Breast epithelium (tissue), 4 donors: ENCODE measurements at regions of chr10 and their contacts with region 1.

Region 1: DNA sequence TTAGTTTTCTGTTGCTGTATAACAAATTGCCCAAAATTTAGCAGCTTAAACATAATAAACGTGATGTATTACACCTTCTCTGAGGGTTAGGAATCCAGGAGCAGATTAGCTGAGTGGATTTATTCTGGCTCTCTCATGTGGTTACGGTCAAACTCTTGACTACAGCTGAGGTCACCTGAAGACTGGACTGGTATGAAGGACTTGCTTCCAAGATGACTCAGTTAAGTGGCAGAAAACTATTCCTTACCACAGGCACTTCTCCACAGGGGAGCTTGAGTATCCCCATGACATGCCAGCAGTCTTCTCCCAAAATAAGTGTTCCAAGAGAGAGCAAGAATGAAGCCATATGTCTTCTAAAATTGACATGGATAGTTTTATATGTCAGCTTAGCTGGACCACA is 957.2 kb upstream of the GHITM start:
- DNase-seq: no peak
- H3K4me3 ChIP-seq: no peak overlapping the region
- H3K27ac ChIP-seq: no peak overlapping the region
- H3K4me1 ChIP-seq: no peaks in the 10 kb centered on the region
- H3K27me3 ChIP-seq: no peaks in the 10 kb centered on the region
- CTCF ChIP-seq: no peak
- POLR2A ChIP-seq: no peak

Region 2: DNA sequence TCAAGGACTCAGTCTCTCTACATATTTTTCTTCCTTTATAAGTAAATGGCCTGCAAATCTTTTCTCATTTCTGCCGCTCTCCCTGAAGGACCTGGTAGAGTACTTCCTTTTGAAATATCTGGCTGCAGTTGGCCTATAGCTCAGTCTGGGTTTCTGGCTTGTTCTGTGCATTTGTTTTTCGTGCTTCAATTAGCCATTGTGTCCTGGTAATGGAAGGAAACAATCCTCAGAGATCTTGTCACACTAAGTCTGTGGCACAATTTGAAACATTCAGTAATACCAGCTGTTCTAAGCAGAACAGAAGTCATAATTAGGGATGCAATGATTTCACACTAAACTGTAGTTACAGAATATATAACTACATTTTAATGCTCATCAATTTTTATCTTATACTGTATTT is 762.1 kb before region 1 on chr10:
- intact Hi-C with region 1: no loop called
- DNase-seq: no peak
- H3K4me3 ChIP-seq: no peak overlapping the region
- H3K27ac ChIP-seq: no peak overlapping the region
- H3K4me1 ChIP-seq: no peaks in the 10 kb centered on the region
- H3K27me3 ChIP-seq: no peaks in the 10 kb centered on the region
- CTCF ChIP-seq: no peak
- POLR2A ChIP-seq: no peak

Region 3: DNA sequence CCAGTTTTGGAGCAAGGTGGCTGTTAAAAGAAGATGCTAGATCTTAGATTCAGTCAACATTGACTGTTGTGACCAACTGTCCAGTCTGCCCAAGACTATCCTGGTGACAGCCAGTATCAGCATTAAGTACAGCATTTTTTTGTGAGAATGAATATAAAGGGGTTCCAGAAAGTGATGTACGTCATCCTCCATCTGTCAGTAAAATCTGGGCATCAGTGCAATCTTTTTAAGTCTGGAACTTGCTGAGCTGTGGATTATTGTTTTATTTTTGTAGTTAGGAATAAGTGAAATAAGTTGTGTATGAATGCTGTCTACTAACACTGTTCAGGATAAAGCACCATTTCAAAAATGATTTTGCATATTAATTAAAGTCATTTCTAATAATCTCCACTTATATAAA is 62.7 kb before region 1 on chr10:
- intact Hi-C with region 1: loop called (anchors 2 kb)
- DNase-seq: no peak
- H3K4me3 ChIP-seq: no peak overlapping the region
- H3K27ac ChIP-seq: no peak overlapping the region
- H3K4me1 ChIP-seq: no peaks in the 10 kb centered on the region
- H3K27me3 ChIP-seq: no peaks in the 10 kb centered on the region
- CTCF ChIP-seq: no peak
- POLR2A ChIP-seq: no peak

Region 4: DNA sequence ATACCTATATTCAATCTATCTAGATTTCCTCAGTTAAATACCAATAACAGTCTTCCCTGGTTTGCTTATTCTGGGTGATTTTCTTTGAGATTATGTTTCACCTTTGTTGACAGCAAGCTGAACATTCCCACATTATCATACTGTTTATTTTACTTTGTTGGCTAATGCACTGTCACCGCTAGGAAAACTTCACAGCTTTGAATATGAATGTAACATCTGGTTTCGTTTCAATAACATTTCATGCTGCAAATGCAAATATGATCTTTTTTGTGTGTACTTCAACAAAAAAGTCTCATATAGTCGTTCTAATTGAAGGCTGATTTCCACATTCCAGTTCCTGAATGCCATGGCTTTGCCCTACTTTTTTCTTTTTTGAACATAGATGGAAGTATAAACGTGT is 10.9 kb after region 1 on chr10:
- intact Hi-C with region 1: loop called (anchors 1 kb)
- DNase-seq: no peak
- H3K4me3 ChIP-seq: no peak overlapping the region
- H3K27ac ChIP-seq: no peak overlapping the region
- H3K4me1 ChIP-seq: no peaks in the 10 kb centered on the region
- H3K27me3 ChIP-seq: no peaks in the 10 kb centered on the region
- CTCF ChIP-seq: no peak
- POLR2A ChIP-seq: no peak

Region 5: DNA sequence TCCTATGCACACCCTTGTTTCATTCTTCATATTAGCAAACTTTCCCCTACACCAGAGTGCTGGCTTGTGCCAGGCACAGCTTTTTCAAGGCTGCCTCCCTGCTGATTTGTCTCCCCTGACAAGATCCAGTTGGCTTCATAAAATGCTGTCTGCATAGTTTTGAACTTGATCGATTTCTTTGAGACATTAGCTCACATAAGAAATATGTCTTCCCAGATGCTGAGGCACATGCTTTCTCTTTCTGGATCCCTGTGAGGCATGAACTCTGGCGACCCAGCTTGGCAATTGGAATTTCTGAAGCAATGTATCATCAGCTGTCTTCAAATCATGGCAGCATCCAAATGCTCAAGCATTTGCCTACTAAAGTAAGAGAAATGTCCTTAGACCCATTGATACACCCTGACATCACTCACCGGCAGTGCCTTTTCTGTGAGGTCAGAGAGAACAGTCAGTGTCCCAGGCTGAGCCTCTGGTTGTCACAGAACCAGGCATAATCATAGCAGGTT is 340.9 kb after region 1 on chr10:
- intact Hi-C with region 1: no loop called
- DNase-seq: no peak
- H3K4me3 ChIP-seq: no peak overlapping the region
- H3K27ac ChIP-seq: no peak overlapping the region
- H3K4me1 ChIP-seq: no peaks in the 10 kb centered on the region
- H3K27me3 ChIP-seq: no peaks in the 10 kb centered on the region
- CTCF ChIP-seq: no peak
- POLR2A ChIP-seq: no peak